ENCODE measurements at regions of chr2 and their contacts with region 1.

Region 1: DNA sequence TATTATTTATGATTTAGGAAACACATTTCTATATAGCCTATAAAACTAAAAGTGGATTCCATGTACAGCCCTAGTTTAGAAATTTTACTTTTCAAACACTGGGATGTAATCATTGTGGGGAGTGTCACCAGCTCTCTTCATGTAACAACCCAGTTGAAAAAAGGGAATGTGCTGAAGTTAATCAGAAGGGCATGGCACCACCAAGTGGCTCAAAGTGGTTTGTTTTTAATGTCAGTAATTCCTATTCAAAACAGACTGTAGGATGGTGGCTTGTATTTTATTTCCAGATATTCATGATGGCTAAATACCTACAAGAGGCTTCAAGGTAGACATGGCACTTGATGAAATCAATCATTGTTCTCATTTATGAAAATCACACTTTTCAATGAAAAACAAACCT is 58.1 kb upstream of the TMEM182 start:
- DNase-seq: no peak
- ATAC-seq: peak; percentile 46; the same call in 1 of the 2 replicates
- H3K4me3 Mint-ChIP-seq: no peak overlapping the region
- H3K27ac Mint-ChIP-seq: no peak overlapping the region
- H3K4me1 Mint-ChIP-seq: peaks cover 12% of the 10 kb centered on the region
- H3K27me3 Mint-ChIP-seq: no peaks in the 10 kb centered on the region
- CTCF ChIP-seq: no peak

Region 2: GRCh38 chr2:102449370-102449974 is 254.3 kb before region 1 on chr2:
- CTCF ChIA-PET with region 1: interaction called, 14 read pairs
- POLR2A ChIA-PET with region 1: no interaction called
- DNase-seq: peak; percentile 51
- ATAC-seq: no peak
- H3K4me3 Mint-ChIP-seq: no peak overlapping the region
- H3K27ac Mint-ChIP-seq: no peak overlapping the region
- H3K4me1 Mint-ChIP-seq: no peaks in the 10 kb centered on the region
- H3K27me3 Mint-ChIP-seq: no peaks in the 10 kb centered on the region
- CTCF ChIP-seq: no peak

Region 3: GRCh38 chr2:102743259-102743658 is 39.5 kb after region 1 on chr2:
- CTCF ChIA-PET with region 1: no interaction called
- POLR2A ChIA-PET with region 1: no interaction called
- DNase-seq: no peak
- ATAC-seq: no peak
- H3K4me3 Mint-ChIP-seq: no peak overlapping the region
- H3K27ac Mint-ChIP-seq: no peak overlapping the region
- H3K4me1 Mint-ChIP-seq: no peaks in the 10 kb centered on the region
- H3K27me3 Mint-ChIP-seq: no peaks in the 10 kb centered on the region
- CTCF ChIP-seq: no peak

Measured in WTC11 (cell line).